ENCODE measurements at regions of chr4 and their contacts with region 1.

Region 1: GRCh38 chr4:111890412-111890811 is 254.8 kb upstream of the FAM241A start:
- DNase-seq: no peak
- ATAC-seq: no peak
- H3K4me3 ChIP-seq: no peak overlapping the region
- H3K27ac ChIP-seq: no peak overlapping the region
- H3K4me1 ChIP-seq: no peaks in the 10 kb centered on the region
- H3K27me3 ChIP-seq: no peaks in the 10 kb centered on the region
- CTCF ChIP-seq: no peak
- EP300 ChIP-seq: no peak
- POLR2A ChIP-seq: no peak
- RAD21 ChIP-seq: no peak

Region 2: GRCh38 chr4:111330786-111331185 is 559.6 kb before region 1 on chr4:
- CTCF ChIA-PET with region 1: no interaction called
- POLR2A ChIA-PET with region 1: no interaction called
- in situ Hi-C with region 1: no loop called
- intact Hi-C with region 1: loop called (anchors 10 kb)
- DNase-seq: no peak
- ATAC-seq: no peak
- H3K4me3 ChIP-seq: no peak overlapping the region
- H3K27ac ChIP-seq: no peak overlapping the region
- H3K4me1 ChIP-seq: no peaks in the 10 kb centered on the region
- H3K27me3 ChIP-seq: no peaks in the 10 kb centered on the region
- CTCF ChIP-seq: no peak
- EP300 ChIP-seq: no peak
- POLR2A ChIP-seq: no peak
- RAD21 ChIP-seq: no peak

Region 3: DNA sequence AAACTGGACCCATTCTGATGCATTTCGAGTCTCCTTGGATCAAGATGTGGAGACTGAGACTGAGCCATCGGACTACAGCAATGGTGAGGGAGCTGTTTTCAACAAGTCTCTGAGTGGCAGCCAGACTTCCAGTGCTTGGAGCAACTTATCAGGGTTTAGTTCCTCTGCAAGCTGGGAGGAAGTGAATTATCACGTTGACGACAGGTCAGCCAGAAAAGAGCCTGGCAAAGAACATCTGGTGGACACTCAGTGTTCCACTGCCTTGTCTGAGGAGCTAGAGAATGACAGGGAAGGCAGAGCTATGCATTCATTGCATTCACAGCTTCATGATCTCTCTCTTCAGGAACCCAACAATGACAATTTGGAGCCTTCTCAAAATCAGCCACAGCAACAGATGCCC is 540.7 kb after region 1 on chr4:
- CTCF ChIA-PET with region 1: no interaction called
- POLR2A ChIA-PET with region 1: no interaction called
- in situ Hi-C with region 1: no loop called
- intact Hi-C with region 1: no loop called
- DNase-seq: no peak
- ATAC-seq: no peak
- H3K4me3 ChIP-seq: no peak overlapping the region
- H3K27ac ChIP-seq: no peak overlapping the region
- H3K4me1 ChIP-seq: no peaks in the 10 kb centered on the region
- H3K27me3 ChIP-seq: 0 out of 5 replicates have a peak, but pooled peaks cover 0 to 3% of the 10 kb centered on the region in 2 experiments
- CTCF ChIP-seq: no peak
- EP300 ChIP-seq: no peak
- POLR2A ChIP-seq: no peak
- RAD21 ChIP-seq: no peak

Measured in HepG2 (cell line).